ENCODE measurements at regions of chr5 and their contacts with region 1.

Region 1: GRCh38 chr5:16552666-16553343 is 64.0 kb downstream of the RETREG1 start:
- DNase-seq: peak; percentile 88
- H3K4me3 Mint-ChIP-seq: no peak overlapping the region
- H3K27ac Mint-ChIP-seq: no peak overlapping the region
- H3K4me1 Mint-ChIP-seq: peaks cover 26% of the 10 kb centered on the region
- H3K27me3 Mint-ChIP-seq: no peaks in the 10 kb centered on the region
- CTCF ChIP-seq: peak; percentile 71

Region 2: GRCh38 chr5:16508730-16509531 is 43.9 kb before region 1 on chr5:
- CTCF ChIA-PET with region 1: no interaction called
- intact Hi-C with region 1: loop called (anchors 5 kb)
- DNase-seq: peak; percentile 74
- H3K4me3 Mint-ChIP-seq: peak overlapping the region; percentile 63
- H3K27ac Mint-ChIP-seq: peak overlapping the region; percentile 85
- H3K4me1 Mint-ChIP-seq: peaks cover 31% of the 10 kb centered on the region
- H3K27me3 Mint-ChIP-seq: no peaks in the 10 kb centered on the region
- CTCF ChIP-seq: no peak

Region 3: GRCh38 chr5:16528382-16529110 is 24.3 kb before region 1 on chr5:
- CTCF ChIA-PET with region 1: no interaction called
- intact Hi-C with region 1: no loop called
- DNase-seq: no peak
- H3K4me3 Mint-ChIP-seq: no peak overlapping the region
- H3K27ac Mint-ChIP-seq: no peak overlapping the region
- H3K4me1 Mint-ChIP-seq: peaks cover 19% of the 10 kb centered on the region
- H3K27me3 Mint-ChIP-seq: no peaks in the 10 kb centered on the region
- CTCF ChIP-seq: no peak

Region 4: GRCh38 chr5:17204133-17204489 is 651.3 kb after region 1 on chr5:
- CTCF ChIA-PET with region 1: no interaction called
- intact Hi-C with region 1: loop called (anchors 10 kb)
- DNase-seq: no peak
- H3K4me3 Mint-ChIP-seq: no peak overlapping the region
- H3K27ac Mint-ChIP-seq: no peak overlapping the region
- H3K4me1 Mint-ChIP-seq: peaks cover 14% of the 10 kb centered on the region
- H3K27me3 Mint-ChIP-seq: peaks cover 19% of the 10 kb centered on the region
- CTCF ChIP-seq: no peak